Vagina (tissue), 2 donors: ENCODE measurements at regions of chr17 and their contacts with region 1.

Region 1: GRCh38 chr17:46061435-46061834 is 62.4 kb downstream of the STH start:
- DNase-seq: no peak
- H3K4me3 ChIP-seq: no peak overlapping the region
- H3K27ac ChIP-seq: no peak overlapping the region
- H3K4me1 ChIP-seq: peaks cover 15% of the 10 kb centered on the region
- H3K27me3 ChIP-seq: no peaks in the 10 kb centered on the region
- CTCF ChIP-seq: peak in 1 of 3 experiments; percentile 29
- POLR2A ChIP-seq: no peak

Region 2: GRCh38 chr17:44906010-44906646 is 1155.3 kb before region 1 on chr17:
- intact Hi-C with region 1: loop called (anchors 5 kb)
- DNase-seq: no peak
- H3K4me3 ChIP-seq: no peak overlapping the region
- H3K27ac ChIP-seq: no peak overlapping the region
- H3K4me1 ChIP-seq: peaks cover 4% of the 10 kb centered on the region
- H3K27me3 ChIP-seq: no peaks in the 10 kb centered on the region
- CTCF ChIP-seq: no peak
- POLR2A ChIP-seq: no peak